ENCODE measurements at regions of chr4 and their contacts with region 1.

Region 1: GRCh38 chr4:154626793-154627484 is 14.5 kb upstream of the FGG start:
- DNase-seq: peak; percentile 67
- H3K4me3 Mint-ChIP-seq: no peak overlapping the region
- H3K27ac Mint-ChIP-seq: no peak overlapping the region
- H3K4me1 Mint-ChIP-seq: no peaks in the 10 kb centered on the region
- H3K27me3 Mint-ChIP-seq: peaks cover 12% of the 10 kb centered on the region

Region 2: GRCh38 chr4:154559494-154560418 is 67.2 kb before region 1 on chr4:
- CTCF ChIA-PET with region 1: interaction called, 39 read pairs
- intact Hi-C with region 1: loop called (anchors 1 kb)
- DNase-seq: no peak
- H3K4me3 Mint-ChIP-seq: no peak overlapping the region
- H3K27ac Mint-ChIP-seq: no peak overlapping the region
- H3K4me1 Mint-ChIP-seq: no peaks in the 10 kb centered on the region
- H3K27me3 Mint-ChIP-seq: peaks cover 4% of the 10 kb centered on the region

Region 3: DNA sequence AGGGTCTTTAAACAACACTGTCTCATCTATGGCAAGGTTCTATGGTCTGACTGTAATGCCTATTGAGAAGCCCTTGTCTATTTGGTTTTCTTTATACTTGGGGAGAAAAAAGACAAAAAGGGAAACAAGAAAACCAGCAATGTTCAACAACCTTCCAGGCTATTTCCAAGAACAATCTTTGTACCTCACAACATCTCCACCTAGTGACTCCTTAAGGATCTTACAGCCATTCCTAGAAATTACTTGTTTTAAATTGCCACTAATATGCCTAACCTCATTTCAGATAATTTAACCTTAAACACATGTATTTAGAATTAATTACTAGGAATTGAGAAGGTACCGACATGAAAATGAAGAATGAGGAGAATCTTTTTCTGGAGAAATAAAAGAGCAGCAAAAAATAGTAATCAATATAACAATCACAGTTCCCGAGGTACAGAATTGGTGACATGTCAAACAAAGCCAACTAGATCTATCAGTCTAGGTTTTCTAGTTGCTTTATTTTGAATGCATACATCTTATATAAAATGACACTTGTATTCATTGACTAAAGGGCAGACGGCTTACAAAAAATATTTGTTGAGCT is 152.5 kb after region 1 on chr4:
- CTCF ChIA-PET with region 1: no interaction called
- intact Hi-C with region 1: loop called (anchors 2 kb)
- DNase-seq: no peak
- H3K4me3 Mint-ChIP-seq: no peak overlapping the region
- H3K27ac Mint-ChIP-seq: no peak overlapping the region
- H3K4me1 Mint-ChIP-seq: no peaks in the 10 kb centered on the region
- H3K27me3 Mint-ChIP-seq: peaks cover 26% of the 10 kb centered on the region

Region 4: DNA sequence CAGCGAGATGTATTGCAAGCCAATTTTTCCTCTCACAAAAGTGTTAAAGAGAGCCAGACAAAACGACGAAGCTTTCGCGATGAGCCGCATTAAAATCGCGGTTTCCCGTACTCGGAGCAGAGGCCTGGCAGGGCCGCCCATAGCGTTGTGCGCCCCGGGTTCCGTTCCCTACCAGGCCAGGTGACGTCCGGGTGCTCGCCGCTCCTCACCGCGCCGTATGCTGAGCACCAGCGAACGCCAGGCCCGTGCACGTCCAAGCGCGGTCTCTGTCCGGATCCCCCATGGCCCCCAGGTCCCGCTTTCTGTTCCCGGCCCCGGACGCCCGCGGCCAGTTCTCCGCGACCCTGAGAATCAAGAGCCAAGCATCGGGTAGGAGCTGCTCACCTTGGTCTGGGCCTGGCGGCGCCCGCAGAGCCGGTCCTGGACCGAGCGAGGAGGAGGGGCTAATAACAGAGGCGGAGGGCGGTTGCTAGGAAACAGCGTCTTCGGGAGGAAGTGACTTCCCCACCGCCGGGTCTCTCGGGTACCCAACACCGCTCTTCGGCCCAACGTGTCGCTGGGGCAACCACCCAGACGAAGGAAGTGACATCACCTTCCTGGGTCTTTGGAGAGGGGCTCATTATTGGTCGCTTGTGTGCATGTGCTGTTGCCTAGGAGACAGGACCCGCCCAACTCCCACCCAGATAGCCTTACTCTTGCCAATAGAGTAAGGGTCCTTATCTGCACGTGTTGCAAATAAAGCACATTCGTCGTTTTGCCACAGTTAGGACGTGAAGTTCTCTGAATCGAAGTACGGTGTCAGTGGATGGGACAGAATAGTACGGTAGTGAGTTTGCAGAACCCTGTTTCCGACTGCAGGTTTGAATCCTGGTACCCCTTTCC is 749.7 kb after region 1 on chr4 and contains the start of gene MAP9:
- CTCF ChIA-PET with region 1: no interaction called
- intact Hi-C with region 1: loop called (anchors 5 kb)
- DNase-seq: peak; percentile 91
- H3K4me3 Mint-ChIP-seq: peak within 1 kb of the TSS; percentile 81
- H3K27ac Mint-ChIP-seq: peak within 1 kb of the TSS; percentile 78
- H3K4me1 Mint-ChIP-seq: peaks cover 11% of the 10 kb centered on the region
- H3K27me3 Mint-ChIP-seq: no peaks in the 10 kb centered on the region
- total RNA-seq, gene MAP9: 5.3 to 6.2 TPM